Thyroid gland (tissue), 4 donors: ENCODE measurements at regions of chr5 and their contacts with region 1.

Region 1: DNA sequence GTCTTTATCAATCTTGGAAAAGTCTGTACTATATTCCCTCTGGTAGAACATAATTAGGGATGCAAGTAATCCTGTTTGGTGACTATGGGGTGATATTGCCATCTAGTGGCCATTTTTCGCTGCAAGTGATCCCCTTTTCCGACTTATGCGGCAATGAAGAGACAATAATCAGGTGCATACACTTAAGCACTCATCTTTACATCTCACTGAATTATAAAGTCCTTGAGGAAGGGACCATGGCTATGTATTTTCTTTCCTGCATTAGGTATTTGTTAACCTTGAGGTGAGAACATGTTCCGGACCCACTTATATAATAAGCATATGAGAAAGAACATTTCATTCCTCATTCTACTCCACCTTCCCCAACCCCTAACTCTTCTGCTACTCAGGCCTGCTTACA is 19.6 kb upstream of the LIX1 start:
- DNase-seq: peak; percentile 60 to 64
- H3K4me3 ChIP-seq: no peak overlapping the region
- H3K27ac ChIP-seq: no peak overlapping the region
- H3K4me1 ChIP-seq: no peaks in the 10 kb centered on the region
- H3K27me3 ChIP-seq: no peaks in the 10 kb centered on the region
- CTCF ChIP-seq: peak; percentile 44 to 87 (median 82)
- POLR2A ChIP-seq: no peak

Region 2: DNA sequence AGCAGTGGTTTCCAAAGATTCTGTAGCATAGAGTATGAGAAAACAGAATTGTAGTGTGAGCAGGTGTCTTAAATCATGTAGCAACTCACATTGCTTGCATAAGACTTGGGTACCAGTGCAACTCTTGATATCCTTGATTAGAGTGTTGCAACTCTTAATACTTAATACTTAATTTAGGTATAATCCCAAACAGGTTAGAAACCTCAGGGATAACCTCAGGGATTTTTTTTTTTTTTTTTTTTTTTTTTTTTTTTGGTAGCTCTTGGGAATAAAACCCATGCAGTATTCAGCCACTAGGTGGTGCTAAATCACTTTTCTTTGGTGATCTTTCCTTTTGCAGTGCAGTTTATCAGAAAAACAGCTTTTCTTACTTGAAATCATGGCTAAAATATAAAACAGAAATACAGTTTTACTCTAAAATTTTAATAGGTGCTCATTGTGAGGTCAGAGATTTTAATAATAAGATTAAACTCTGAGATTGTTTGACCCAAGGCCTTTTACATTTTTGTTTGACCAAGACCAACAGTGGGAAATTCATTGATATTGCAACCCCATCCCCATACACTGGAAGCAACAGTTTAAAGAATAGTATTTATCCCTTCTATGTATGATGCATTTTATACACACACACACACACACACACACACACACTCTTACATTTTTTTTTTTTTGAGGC is 409.6 kb before region 1 on chr5:
- intact Hi-C with region 1: loop called (anchors 5 kb)
- DNase-seq: no peak
- H3K4me3 ChIP-seq: no peak overlapping the region
- H3K27ac ChIP-seq: no peak overlapping the region
- H3K4me1 ChIP-seq: no peaks in the 10 kb centered on the region
- H3K27me3 ChIP-seq: no peaks in the 10 kb centered on the region
- CTCF ChIP-seq: peak in 5 of 6 experiments; percentile 11 to 83 (median 44)
- POLR2A ChIP-seq: no peak

Region 3: DNA sequence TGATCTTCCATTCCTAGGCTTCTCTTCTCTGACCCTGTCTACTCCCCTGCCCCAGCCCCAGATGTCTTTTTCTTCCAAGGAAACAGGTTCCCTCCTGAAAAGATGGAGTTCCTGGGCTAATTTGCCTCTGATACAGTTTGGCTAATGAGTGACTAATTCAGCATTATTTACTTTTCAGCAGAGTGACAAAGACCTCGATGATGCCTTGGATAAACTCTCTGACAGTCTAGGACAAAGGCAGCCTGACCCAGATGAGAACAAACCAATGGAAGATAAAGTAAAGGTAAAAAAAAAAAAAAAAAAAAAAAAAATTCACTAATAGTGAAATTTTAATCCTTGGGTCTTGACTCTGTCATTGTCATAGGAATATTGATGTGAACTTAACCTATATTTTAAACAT is 397.0 kb before region 1 on chr5:
- intact Hi-C with region 1: loop called (anchors 5 kb)
- DNase-seq: no peak
- H3K4me3 ChIP-seq: no peak overlapping the region
- H3K27ac ChIP-seq: no peak overlapping the region
- H3K4me1 ChIP-seq: no peaks in the 10 kb centered on the region
- H3K27me3 ChIP-seq: no peaks in the 10 kb centered on the region
- CTCF ChIP-seq: no peak
- POLR2A ChIP-seq: no peak

Region 4: DNA sequence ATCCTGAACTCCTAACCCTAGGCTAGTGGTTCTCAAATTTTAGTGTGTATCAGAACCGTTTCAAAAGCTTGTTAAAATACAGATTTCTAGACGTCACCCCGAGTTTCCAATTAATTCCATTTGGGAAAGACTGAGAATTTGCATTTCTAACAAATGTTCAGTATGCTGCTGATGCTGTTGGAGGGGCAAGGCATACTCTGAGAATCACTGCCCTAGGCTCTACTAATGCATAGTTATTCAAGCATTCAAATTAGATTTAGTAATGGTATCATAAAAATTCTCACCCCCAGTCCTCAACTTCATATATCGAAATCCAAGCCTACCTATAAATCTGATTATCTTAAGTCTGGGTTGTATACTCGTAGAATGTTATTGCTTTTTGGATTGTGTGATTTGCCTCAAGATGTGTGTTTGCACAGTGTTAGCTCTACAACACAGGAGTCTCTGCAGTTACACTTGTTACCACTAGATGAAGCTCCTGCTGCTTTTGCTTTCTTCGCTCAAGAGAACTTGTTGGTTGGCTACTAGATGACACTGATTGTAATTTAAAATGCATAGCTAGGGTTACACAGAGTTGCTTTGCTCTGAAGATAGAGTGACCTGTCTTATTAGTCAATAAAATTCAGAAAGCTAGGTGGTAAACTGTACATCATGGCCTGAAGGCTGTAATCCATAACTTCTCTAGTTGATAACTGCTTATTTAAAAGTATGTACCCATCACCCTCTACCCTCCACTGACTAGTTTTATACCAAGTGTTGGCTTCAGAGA is 293.3 kb before region 1 on chr5:
- intact Hi-C with region 1: loop called (anchors 5 kb)
- DNase-seq: peak in 1 of 2 donors; percentile 5
- H3K4me3 ChIP-seq: no peak overlapping the region
- H3K27ac ChIP-seq: no peak overlapping the region
- H3K4me1 ChIP-seq: no peaks in the 10 kb centered on the region
- H3K27me3 ChIP-seq: no peaks in the 10 kb centered on the region
- CTCF ChIP-seq: peak; percentile 82 to 97 (median 90)
- POLR2A ChIP-seq: no peak